PC-9 (cell line): ENCODE measurements at regions of chr1 and their contacts with region 1.

Region 1: GRCh38 chr1:113291777-113292602 is 98.3 kb upstream of the MAGI3 start:
- DNase-seq: no peak
- H3K4me3 ChIP-seq: no peak overlapping the region
- H3K27ac ChIP-seq: no peak overlapping the region
- H3K4me1 ChIP-seq: no peaks in the 10 kb centered on the region
- H3K27me3 ChIP-seq: no peaks in the 10 kb centered on the region
- CTCF ChIP-seq: no peak

Region 2: DNA sequence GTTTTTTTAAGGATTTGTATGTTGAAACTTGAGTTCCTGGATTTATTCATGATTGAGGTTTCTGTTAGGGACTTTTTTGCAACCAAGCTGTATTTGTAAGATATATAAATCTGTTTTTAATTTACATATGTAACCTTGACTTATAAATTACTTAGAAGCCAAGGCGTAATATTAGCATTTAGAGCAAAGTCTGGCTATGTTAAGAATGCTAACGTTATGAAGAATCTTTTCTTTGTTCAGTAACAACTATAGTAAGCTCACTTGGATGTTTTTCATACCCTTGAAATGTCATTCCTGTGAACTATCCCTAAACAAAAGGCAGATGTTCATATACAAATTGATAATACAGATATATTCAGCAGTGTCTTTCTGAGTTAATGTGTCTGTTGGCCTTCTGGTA is 253.6 kb after region 1 on chr1:
- CTCF ChIA-PET with region 1: no interaction called
- POLR2A ChIA-PET with region 1: interaction called, 15 read pairs
- intact Hi-C with region 1: no loop called
- DNase-seq: no peak
- H3K4me3 ChIP-seq: no peak overlapping the region
- H3K27ac ChIP-seq: no peak overlapping the region
- H3K4me1 ChIP-seq: no peaks in the 10 kb centered on the region
- H3K27me3 ChIP-seq: no peaks in the 10 kb centered on the region
- CTCF ChIP-seq: no peak